Activated CD8-positive, alpha-beta T cell treated with anti-CD3 and anti-CD28 coated beads, Interleukin-2, amount 10 ng/mL, durations not matched to agents 7 days and 5 days (primary cell): ENCODE measurements at regions of chr1 and their contacts with region 1.

Region 1: DNA sequence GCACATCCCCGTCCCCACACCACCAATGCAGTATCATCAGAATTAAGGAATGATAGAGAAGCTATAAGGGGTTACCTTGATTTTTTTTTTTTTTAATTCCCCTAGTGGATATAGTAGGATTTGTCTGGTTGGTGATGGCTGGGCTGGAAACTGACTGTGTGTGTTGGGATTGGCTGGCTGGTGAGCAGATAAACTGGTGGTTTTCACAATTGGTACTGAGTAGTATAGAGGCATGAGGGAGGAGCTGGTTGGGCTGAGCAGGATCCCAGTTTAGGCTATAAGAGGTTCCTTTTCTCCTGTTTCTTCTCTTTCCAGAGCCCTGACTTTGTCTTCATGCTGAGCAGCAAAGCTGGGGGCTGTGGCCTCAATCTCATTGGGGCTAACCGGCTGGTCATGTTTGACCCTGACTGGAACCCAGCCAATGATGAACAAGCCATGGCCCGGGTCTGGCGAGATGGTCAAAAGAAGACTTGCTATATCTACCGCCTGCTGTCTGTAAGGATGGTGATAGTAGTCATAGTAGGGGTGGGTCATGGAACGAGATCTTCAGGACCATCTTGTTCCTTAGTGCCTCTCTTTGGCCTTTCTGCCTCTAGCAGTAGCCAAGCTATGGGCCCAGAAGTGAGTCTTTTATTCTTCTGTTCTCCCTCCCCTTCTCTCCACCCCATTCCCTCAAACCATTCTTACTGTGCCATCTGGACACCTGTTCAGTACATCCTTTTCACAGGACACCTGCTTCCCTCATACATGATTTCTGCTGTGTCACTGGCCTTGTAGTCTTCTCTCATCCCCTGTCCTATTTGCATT is 26.9 kb downstream of the RAD54L start:
- DNase-seq: no peak
- ATAC-seq: no peak
- H3K4me3 Mint-ChIP-seq: no peak overlapping the region
- H3K27ac Mint-ChIP-seq: no peak overlapping the region
- H3K4me1 Mint-ChIP-seq: no peaks in the 10 kb centered on the region
- H3K27me3 Mint-ChIP-seq: no peaks in the 10 kb centered on the region

Region 2: GRCh38 chr1:46285730-46286477 is 11.5 kb after region 1 on chr1:
- CTCF ChIA-PET with region 1: interaction called, 7 read pairs
- POLR2A ChIA-PET with region 1: interaction called, 13 read pairs
- DNase-seq: peak; percentile 66
- ATAC-seq: peak; percentile 82
- H3K4me3 Mint-ChIP-seq: no peak overlapping the region
- H3K27ac Mint-ChIP-seq: peak overlapping the region; percentile 79
- H3K4me1 Mint-ChIP-seq: peaks cover 32% of the 10 kb centered on the region
- H3K27me3 Mint-ChIP-seq: no peaks in the 10 kb centered on the region

Region 3: DNA sequence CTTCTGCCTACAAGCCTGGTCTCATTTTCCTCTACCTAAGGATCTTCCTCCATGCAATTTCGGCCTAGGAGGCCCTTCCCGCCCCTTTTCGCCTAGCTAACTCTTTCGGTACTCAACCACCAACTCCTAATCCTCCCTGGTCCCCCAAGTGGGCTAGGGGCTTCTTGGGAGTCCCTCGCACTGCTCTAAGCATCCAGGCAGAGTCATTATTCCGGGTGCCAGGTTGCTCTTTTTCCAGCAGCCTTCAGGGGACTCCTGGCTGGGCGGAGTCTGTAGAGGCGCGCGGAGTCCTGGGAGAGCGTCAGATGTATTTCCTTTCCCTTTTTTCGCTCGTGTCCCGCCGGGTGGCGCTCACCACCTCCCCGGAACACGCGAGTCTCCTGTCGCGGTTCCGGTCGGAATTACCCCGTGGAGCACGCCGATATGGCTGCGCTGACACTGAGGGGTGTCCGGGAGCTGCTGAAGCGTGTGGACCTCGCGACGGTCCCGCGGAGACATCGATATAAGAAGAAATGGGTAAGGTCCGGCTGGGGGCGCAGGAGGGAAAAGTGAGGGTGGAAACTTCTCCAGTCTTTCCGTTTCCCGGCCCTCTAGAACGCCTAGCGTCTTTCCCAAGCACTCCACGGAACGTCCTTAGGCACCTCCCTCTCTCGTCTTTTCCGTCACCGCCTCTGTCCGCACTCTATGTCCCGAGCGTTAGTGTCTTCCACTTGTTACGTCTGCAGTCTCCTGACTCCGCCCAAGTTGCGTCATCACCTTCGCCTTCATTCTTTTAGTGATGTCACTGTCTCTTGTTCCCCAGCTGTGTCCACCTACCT is 66.2 kb after region 1 on chr1 and contains the start of gene NSUN4:
- CTCF ChIA-PET with region 1: no interaction called
- POLR2A ChIA-PET with region 1: no interaction called
- DNase-seq: peak; percentile 89
- ATAC-seq: peak; percentile 92
- H3K4me3 Mint-ChIP-seq: peak within 1 kb of the TSS; percentile 100
- H3K27ac Mint-ChIP-seq: peak within 1 kb of the TSS; percentile 100
- H3K4me1 Mint-ChIP-seq: peaks cover 34% of the 10 kb centered on the region
- H3K27me3 Mint-ChIP-seq: no peaks in the 10 kb centered on the region
- total RNA-seq, gene NSUN4: 22.3 to 22.5 TPM